Heart left ventricle (tissue), 16 donors: ENCODE measurements at regions of chr2 and their contacts with region 1.

Region 1: GRCh38 chr2:71995067-71995665 is 152.5 kb downstream of the CYP26B1 start:
- DNase-seq: no peak
- ATAC-seq: no peak
- H3K4me3 ChIP-seq: no peak overlapping the region
- H3K27ac ChIP-seq: no peak overlapping the region
- H3K4me1 ChIP-seq: no peaks in the 10 kb centered on the region
- H3K27me3 ChIP-seq: peaks cover 0 to 9% (median 0%) of the 10 kb centered on the region in 9 donors
- CTCF ChIP-seq: peak in 10 of 12 donors; percentile 9 to 53 (median 36)
- POLR2A ChIP-seq: no peak

Region 2: DNA sequence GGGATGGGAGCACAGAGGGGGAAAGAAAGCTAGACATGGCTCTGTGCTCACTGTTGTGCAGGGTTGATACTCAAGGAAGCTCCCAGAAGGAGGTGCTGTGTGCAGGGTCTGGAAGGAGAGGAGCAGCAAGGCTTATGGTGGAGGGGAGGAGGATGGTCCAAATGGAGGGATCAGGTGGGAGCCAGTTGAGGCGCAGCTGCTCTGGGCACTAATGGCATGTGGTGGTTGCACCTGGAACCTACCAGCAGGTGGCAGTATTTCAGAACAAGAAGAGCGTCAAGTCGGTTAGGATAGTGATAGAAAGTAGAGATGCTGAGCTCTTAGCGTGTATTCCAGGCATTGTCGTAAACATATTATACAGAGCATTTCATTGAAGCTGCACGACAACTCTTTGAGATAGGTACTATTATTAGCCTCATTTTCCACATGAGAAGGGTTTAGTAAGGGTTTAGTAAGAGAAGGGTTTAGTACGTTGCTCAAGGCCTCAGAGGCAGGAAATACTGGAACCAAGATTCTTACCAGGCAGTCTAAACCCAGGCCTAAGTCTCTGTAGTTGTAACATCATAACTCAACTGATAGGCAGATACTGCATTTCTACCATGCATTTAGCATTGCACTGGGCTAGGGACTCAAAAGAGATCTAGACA is 71.2 kb before region 1 on chr2:
- intact Hi-C with region 1: loop called in 4 of 10 experiments (anchors 1 to 10 kb)
- DNase-seq: peak in 3 of 5 donors; percentile 53 to 68 (median 59)
- ATAC-seq: peak; percentile 37 to 83 (median 74)
- H3K4me3 ChIP-seq: no peak overlapping the region
- H3K27ac ChIP-seq: no peak overlapping the region
- H3K4me1 ChIP-seq: no peaks in the 10 kb centered on the region
- H3K27me3 ChIP-seq: no peaks in the 10 kb centered on the region
- CTCF ChIP-seq: peak; percentile 77 to 87 (median 84)
- POLR2A ChIP-seq: no peak

Region 3: GRCh38 chr2:72115552-72116546 is 120.7 kb after region 1 on chr2:
- intact Hi-C with region 1: no loop called
- DNase-seq: no peak
- ATAC-seq: peak in 3 of 4 donors; percentile 32 to 51 (median 46)
- H3K4me3 ChIP-seq: no peak overlapping the region
- H3K27ac ChIP-seq: no peak overlapping the region
- H3K4me1 ChIP-seq: no peaks in the 10 kb centered on the region
- H3K27me3 ChIP-seq: peaks cover 0 to 8% (median 0%) of the 10 kb centered on the region in 9 donors
- CTCF ChIP-seq: peak in 2 of 12 donors; percentile 14 to 19
- POLR2A ChIP-seq: no peak